ENCODE measurements at regions of chrX and their contacts with region 1.

Region 1: GRCh38 chrX:116490104-116490503 is 27.3 kb upstream of the CT83 start:
- DNase-seq: no peak
- ATAC-seq: no peak
- H3K4me3 Mint-ChIP-seq: no peak overlapping the region
- H3K27ac Mint-ChIP-seq: no peak overlapping the region
- H3K4me1 Mint-ChIP-seq: no peaks in the 10 kb centered on the region
- H3K27me3 Mint-ChIP-seq: no peaks in the 10 kb centered on the region

Region 2: DNA sequence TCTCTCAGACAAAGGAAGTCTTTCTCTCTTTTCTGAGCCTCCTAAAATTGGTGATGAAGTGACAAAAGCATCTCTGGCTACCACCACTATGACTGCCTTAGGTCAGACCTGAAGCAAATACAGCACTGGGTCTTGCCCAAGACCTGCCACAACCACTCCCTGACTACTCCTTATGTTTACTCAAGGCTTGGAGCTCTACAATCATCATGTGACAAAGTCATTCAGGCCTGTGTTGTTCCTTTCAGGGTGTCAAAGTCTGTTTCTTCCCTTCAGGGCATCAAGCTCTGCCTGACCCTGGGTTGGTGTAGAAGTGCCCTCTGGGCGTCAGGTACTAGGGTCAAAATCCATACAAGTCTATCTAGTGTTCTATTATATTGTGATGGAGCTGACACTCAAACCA is 391.9 kb after region 1 on chrX:
- CTCF ChIA-PET with region 1: no interaction called
- POLR2A ChIA-PET with region 1: no interaction called
- intact Hi-C with region 1: no loop called
- DNase-seq: no peak
- ATAC-seq: no peak
- H3K4me3 Mint-ChIP-seq: no peak overlapping the region
- H3K27ac Mint-ChIP-seq: no peak overlapping the region
- H3K4me1 Mint-ChIP-seq: no peaks in the 10 kb centered on the region
- H3K27me3 Mint-ChIP-seq: no peaks in the 10 kb centered on the region

Region 3: GRCh38 chrX:118254611-118255010 is 1764.5 kb after region 1 on chrX:
- CTCF ChIA-PET with region 1: no interaction called
- POLR2A ChIA-PET with region 1: no interaction called
- intact Hi-C with region 1: loop called in 1 of 2 experiments (anchors 10 kb)
- DNase-seq: peak; percentile 60
- ATAC-seq: no peak
- H3K4me3 Mint-ChIP-seq: no peak overlapping the region
- H3K27ac Mint-ChIP-seq: no peak overlapping the region
- H3K4me1 Mint-ChIP-seq: no peaks in the 10 kb centered on the region
- H3K27me3 Mint-ChIP-seq: no peaks in the 10 kb centered on the region